ENCODE measurements at regions of chr3 and their contacts with region 1.

Region 1: DNA sequence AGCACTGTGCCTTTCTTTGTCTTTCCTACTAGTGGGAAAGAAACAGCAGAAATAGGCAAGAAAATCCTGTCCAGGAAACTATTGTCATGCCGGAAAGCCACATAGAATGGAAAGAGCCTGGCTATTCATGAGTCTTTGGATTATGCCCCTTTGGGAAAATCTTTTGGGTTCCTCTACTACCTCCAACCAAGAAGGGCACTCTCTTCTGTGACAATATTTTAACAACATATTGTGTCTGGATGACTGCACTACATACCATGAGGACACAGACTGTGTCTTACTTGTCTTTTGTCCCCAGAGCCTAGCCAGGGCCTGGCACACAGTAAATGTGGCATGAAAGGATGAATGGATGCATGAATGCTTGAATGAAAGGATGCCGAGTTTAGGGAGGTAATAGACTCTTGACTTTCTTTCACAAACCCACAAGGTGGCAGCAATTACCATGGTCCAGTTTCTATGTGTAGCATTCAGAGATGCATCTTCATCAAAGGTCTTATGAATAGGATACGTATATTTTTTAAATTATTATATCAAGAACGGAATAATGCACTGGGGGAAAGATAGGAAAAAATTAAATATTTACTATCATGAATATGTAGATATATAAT is 30.3 kb downstream of the ARL14 start:
- DNase-seq: peak; percentile 28
- H3K27ac ChIP-seq: no peak overlapping the region
- CTCF ChIP-seq: peak; percentile 55

Region 2: DNA sequence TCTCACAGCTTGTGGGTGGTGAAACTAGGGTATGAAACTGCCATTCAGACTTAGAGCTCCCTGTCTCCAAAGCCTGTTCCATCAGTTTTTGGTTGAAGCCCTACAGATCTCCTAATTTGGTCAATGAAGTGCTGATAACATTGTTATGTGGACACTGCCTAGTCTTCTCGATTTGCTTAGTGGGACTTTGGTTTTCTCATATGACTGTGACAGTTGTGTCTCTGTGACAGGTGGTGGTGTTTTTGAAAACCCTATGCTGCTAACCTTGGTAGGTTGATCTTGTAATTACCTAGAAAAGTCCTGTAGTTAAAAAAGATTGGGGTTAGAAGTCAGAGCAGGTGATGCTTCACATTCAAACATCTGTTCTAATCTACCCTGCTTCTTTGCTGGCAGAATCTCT is 57.9 kb after region 1 on chr3:
- CTCF ChIA-PET with region 1: no interaction called
- POLR2A ChIA-PET with region 1: no interaction called
- DNase-seq: no peak
- H3K27ac ChIP-seq: no peak overlapping the region
- CTCF ChIP-seq: no peak

Region 3: DNA sequence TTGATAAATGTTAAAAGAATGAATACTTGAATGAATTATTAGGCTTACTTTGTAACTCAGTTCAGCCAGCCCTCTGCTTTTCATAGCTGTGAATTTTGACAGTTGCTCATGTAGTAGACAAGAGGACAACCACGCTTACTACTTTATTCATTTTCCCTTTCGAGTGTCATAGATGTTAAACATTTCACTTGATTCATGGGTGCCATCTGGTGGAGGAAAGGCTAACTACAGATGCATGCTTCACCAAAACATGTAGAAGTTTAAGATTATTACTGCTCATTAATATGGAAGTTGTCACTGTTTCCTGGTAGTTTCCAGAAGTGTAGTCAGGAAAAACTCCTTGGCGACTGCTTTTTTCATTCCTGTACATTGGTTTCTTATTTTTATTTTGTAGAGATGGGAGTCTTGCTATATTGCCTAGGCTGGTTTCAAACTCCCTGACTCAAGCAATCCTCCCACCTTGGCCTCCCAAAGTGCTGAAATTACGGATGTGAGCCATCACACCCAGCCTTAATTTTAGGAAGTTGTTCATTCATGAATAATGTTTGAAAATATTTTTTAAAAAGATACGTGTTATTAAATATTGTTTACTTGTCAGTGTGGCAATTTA is 234.7 kb after region 1 on chr3:
- CTCF ChIA-PET with region 1: interaction called, 10 read pairs
- POLR2A ChIA-PET with region 1: no interaction called
- DNase-seq: peak; percentile 38
- H3K27ac ChIP-seq: no peak overlapping the region
- CTCF ChIP-seq: peak; percentile 82

Measured in RWPE1 (cell line).